CD8-positive, alpha-beta T cell (primary cell): ENCODE measurements at regions of chr5 and their contacts with region 1.

Region 1: DNA sequence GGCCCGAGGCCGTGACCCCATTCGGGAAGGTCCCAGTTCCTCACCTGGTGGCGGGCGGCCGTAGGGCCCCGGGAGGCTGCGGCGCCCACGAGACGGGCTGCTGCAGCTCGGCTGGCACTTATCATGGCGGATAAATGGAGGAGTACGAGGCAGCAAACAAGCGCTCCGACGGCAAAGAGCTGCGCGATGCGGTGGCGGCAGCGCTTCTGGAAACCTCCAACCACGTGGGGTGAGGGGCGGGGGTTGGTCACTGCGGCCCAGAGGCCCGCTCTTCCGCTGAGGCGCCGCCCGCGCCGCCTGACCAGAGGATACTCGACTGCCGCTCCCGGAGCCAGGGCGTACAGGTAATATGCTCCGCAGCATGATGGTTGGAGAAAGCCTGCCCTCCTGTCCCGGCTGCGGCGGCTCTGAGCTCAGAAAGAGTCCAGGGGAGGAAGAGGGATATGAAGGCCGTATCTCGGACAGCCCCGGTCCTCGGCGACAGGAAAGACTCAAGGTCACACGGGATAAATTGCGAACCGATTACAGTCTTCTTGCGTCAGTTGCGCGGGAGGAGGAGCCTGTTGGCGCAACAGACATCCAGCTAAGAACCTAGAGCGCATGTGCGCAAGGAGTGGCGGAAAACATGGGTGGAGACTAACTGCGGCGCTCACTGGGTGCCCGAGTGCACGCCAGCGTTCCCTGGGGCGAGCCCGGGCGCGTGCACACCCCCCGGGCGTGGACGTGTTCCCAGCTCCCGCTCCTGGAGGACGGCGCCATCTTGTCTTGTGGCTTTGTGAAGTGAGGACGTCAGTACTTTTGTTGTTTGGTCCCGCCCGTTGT is at the start of gene HSPA9:
- DNase-seq: peak; percentile 91 to 100 (median 97)
- ATAC-seq: peak; percentile 82
- H3K4me3 ChIP-seq: peak within 1 kb of the TSS; percentile 77 to 80
- H3K4me3 Mint-ChIP-seq: peak within 1 kb of the TSS; percentile 99
- H3K27ac ChIP-seq: peak within 1 kb of the TSS; percentile 98 to 99
- H3K27ac Mint-ChIP-seq: peak within 1 kb of the TSS; percentile 100
- H3K4me1 ChIP-seq: peaks cover 21% of the 10 kb centered on the region
- H3K4me1 Mint-ChIP-seq: peaks cover 43% of the 10 kb centered on the region
- H3K27me3 ChIP-seq: no peaks in the 10 kb centered on the region
- H3K27me3 Mint-ChIP-seq: no peaks in the 10 kb centered on the region
- CTCF ChIP-seq: no peak
- total RNA-seq, gene HSPA9: 464 to 500 TPM

Region 2: DNA sequence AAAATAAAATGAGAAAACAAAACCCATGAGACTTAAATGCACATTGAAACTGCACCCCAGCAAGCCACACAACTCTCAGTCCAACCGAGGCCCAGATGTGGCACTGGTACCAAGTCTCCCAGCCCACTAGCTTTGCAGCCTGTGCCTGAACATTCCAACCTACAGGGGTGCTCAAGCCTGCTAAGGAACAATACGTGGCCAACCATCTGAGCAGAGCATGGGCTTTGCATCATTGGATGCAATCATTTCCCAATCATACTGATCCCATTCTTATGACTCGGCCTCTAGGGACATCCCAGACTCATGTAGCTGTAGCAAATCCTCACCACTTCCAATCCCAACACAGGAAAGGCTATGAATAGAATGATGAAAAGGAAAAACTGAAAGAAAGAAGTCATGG is 1373.5 kb before region 1 on chr5:
- CTCF ChIA-PET with region 1: no interaction called
- POLR2A ChIA-PET with region 1: no interaction called
- intact Hi-C with region 1: no loop called
- DNase-seq: no peak
- ATAC-seq: no peak
- H3K4me3 ChIP-seq: no peak overlapping the region
- H3K4me3 Mint-ChIP-seq: no peak overlapping the region
- H3K27ac ChIP-seq: no peak overlapping the region
- H3K27ac Mint-ChIP-seq: no peak overlapping the region
- H3K4me1 ChIP-seq: no peaks in the 10 kb centered on the region
- H3K4me1 Mint-ChIP-seq: no peaks in the 10 kb centered on the region
- H3K27me3 ChIP-seq: no peaks in the 10 kb centered on the region
- H3K27me3 Mint-ChIP-seq: no peaks in the 10 kb centered on the region
- CTCF ChIP-seq: no peak

Region 3: DNA sequence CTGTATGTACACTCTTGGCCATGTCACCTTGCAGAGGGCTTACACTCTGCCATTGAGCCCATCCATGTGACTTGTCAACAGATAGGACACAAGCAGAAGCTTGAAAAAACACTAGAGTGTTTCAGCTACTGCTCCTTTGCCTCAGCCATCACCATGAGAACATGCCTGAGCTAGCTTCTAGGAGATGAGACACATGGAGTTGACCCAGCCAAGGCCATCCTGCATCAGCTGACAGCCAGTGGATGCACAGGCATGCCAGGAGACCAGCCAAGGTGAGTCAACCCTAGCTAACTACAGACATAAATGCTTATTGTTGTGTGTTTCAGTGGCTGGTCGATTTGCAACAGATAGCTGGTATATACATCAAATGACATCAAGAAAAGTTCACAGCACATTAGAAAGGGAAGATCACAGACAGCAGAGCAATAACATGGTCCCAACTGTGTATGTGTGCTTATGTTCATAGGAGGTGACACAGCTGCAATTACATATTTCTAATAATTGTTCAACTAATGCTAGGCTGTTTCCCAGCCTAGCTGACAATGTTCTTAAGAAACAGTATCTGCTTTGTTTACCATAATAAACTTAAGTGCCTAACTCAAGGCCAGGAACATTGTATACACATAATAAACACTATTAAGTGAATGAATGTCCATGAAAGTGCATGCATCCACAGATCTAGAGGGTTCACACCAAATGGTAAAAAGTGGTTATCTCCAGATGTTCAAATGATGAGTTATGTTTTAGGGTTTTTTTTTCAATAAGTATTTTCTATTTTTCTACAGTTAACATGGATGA is 1182.0 kb before region 1 on chr5:
- CTCF ChIA-PET with region 1: no interaction called
- POLR2A ChIA-PET with region 1: no interaction called
- intact Hi-C with region 1: no loop called
- DNase-seq: no peak
- ATAC-seq: no peak
- H3K4me3 ChIP-seq: no peak overlapping the region
- H3K4me3 Mint-ChIP-seq: no peak overlapping the region
- H3K27ac ChIP-seq: no peak overlapping the region
- H3K27ac Mint-ChIP-seq: no peak overlapping the region
- H3K4me1 ChIP-seq: no peaks in the 10 kb centered on the region
- H3K4me1 Mint-ChIP-seq: no peaks in the 10 kb centered on the region
- H3K27me3 ChIP-seq: no peaks in the 10 kb centered on the region
- H3K27me3 Mint-ChIP-seq: peaks cover 13% of the 10 kb centered on the region
- CTCF ChIP-seq: no peak

Region 4: DNA sequence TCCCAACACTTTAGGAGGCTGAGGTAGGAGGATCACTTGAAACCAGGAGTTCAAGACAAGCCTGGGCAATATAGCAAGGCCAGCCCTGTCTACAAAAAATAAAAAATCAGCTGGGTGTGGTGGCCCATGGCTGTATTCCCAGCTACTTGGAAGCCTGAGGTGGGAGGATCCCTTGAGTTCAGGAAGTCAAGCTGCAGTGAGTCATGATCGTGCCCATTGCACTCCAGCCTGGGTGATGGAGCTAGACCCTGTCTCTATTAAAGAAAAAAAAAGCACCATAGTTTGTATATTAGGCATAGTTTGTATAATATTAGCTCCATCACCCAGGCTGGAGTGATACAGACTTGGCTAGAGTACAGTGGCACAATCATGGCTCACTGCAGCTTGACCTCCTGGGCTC is 426.6 kb before region 1 on chr5:
- CTCF ChIA-PET with region 1: no interaction called
- POLR2A ChIA-PET with region 1: no interaction called
- intact Hi-C with region 1: no loop called
- DNase-seq: no peak
- ATAC-seq: no peak
- H3K4me3 ChIP-seq: no peak overlapping the region
- H3K4me3 Mint-ChIP-seq: no peak overlapping the region
- H3K27ac ChIP-seq: no peak overlapping the region
- H3K27ac Mint-ChIP-seq: no peak overlapping the region
- H3K4me1 ChIP-seq: no peaks in the 10 kb centered on the region
- H3K4me1 Mint-ChIP-seq: no peaks in the 10 kb centered on the region
- H3K27me3 ChIP-seq: no peaks in the 10 kb centered on the region
- H3K27me3 Mint-ChIP-seq: no peaks in the 10 kb centered on the region
- CTCF ChIP-seq: no peak

Region 5: DNA sequence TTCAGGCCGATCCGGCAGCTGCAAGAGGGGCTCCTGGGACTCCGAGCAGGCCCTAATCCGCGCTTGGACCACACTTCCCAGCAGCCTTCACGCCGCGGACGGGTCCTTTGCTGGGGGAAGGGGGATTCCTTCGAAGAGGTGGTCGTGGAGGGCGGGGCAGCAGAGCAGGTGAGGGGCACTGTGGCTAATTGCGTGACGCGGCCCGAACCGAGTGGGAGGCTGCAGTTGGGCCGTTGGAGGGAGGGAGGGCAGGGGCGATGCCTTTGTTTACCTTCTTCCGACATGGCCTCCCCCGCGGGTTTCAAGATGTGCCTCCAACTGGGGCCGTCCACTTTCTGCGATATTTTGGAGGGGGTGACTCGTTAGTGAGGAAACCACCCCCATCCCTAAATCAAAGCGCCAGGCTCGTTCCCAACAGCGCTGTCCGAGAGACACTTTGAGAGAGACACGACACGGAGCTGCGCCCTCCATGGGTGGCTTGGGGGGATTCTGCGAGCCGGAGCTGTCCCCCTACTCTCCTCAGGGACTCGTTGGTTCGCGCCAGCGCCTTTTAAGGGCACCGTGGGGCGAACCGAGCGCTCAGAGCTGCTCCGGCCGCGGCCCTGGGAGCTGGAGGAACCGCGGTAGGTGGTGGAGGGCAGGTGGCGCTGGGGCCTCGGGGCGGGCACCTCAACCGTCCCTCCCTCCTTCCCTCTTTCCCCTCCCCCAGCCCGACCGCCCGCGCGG is 237.6 kb before region 1 on chr5 and contains the start of gene FAM53C:
- CTCF ChIA-PET with region 1: interaction called, 3 read pairs
- POLR2A ChIA-PET with region 1: no interaction called
- intact Hi-C with region 1: loop called in 1 of 2 experiments (anchors 5 kb)
- DNase-seq: peak; percentile 88 to 98 (median 91)
- ATAC-seq: peak; percentile 84
- H3K4me3 ChIP-seq: peak within 1 kb of the TSS; percentile 69 to 85
- H3K4me3 Mint-ChIP-seq: peak within 1 kb of the TSS; percentile 93
- H3K27ac ChIP-seq: peak within 1 kb of the TSS; percentile 95 to 99
- H3K27ac Mint-ChIP-seq: peak within 1 kb of the TSS; percentile 100
- H3K4me1 ChIP-seq: peaks cover 23% of the 10 kb centered on the region
- H3K4me1 Mint-ChIP-seq: peaks cover 41% of the 10 kb centered on the region
- H3K27me3 ChIP-seq: no peaks in the 10 kb centered on the region
- H3K27me3 Mint-ChIP-seq: no peaks in the 10 kb centered on the region
- CTCF ChIP-seq: no peak
- total RNA-seq, gene FAM53C: 99.8 to 99.9 TPM

Region 6: DNA sequence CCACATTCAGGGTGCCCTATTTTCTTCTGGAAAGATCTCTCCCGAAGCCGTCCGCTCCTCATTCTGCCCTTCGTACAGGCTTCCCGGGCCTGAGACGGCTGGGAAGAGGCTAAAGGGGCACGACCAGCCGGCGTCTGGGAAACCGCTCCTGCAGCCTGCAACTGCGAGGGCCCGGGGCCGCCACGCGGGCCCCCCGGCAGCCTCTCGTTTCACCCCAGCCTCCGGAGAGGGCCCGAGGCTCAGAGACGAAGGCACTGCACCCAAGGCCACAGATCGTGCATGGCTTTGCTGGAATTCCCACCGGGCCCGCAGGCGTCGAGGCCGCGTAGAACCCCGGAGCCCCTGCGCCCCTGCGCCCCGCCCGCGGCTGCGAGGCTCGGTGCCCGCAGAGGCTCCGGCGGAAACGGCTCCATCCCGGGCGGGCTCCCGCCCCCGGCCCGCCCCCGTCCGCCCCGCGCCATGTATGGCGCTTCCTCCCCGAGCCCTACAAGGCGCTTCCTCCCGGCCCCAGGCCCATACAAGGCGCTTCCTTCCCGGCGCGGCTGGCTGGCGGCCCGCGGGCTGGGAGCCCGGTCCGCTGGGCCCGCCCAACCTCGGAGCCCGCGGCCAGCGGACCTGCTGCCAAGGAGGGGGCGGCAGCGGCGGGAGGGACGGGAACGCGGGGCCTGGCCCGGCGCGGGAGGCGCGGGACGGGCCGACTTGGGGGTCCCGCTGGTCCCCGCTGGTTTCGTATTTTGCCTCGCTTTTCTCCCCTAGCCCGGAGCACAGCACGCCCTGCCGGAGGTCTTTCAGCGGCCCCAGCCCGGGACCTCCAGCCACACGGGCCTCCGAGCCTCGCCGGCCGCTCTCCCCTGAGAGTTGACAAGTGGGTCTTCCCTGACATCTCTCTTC is 83.5 kb before region 1 on chr5:
- CTCF ChIA-PET with region 1: no interaction called
- POLR2A ChIA-PET with region 1: no interaction called
- intact Hi-C with region 1: loop called in 1 of 2 experiments (anchors 1 kb)
- DNase-seq: peak; percentile 72 to 94 (median 84)
- ATAC-seq: peak; percentile 98
- H3K4me3 ChIP-seq: peak overlapping the region; percentile 42 to 63
- H3K4me3 Mint-ChIP-seq: peak overlapping the region; percentile 93
- H3K27ac ChIP-seq: no peak overlapping the region
- H3K27ac Mint-ChIP-seq: no peak overlapping the region
- H3K4me1 ChIP-seq: peaks cover 19% of the 10 kb centered on the region
- H3K4me1 Mint-ChIP-seq: peaks cover 16% of the 10 kb centered on the region
- H3K27me3 ChIP-seq: peaks cover 0 to 15% of the 10 kb centered on the region in 2 experiments
- H3K27me3 Mint-ChIP-seq: peaks cover 18% of the 10 kb centered on the region
- CTCF ChIP-seq: no peak

Region 7: DNA sequence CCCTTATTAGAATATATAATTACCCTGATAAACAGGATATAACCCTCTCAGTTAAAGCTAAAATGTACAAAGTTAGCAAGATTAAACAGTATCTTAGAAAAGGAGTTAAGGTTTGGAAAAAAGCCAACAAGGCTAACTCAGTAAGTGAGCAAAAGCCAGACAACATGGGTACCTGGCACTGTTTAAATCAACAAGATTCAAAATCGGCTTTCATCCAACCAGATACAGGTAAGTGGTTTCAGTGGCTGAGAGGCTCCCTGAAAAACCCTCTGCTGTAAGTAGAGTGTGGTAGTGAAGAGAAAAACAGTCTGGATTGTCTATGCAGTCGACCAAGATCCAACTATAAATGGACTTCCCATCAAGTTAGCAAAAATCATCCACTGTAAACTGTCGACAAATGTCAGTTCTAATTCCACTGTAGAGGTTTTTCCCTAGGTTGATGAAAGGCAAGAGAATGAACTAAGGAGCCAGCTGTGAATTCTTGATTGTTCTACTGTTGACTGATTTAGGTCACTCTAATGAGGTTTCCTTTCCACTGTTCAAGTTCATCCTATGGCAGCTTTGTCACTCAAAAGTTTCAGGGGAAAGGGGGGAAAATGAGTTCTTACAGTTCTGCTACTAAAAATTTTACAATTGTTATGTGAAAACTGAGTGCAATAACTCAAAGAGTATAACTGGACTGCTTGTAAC is 59.7 kb before region 1 on chr5:
- CTCF ChIA-PET with region 1: no interaction called
- POLR2A ChIA-PET with region 1: no interaction called
- intact Hi-C with region 1: no loop called
- DNase-seq: no peak
- ATAC-seq: no peak
- H3K4me3 ChIP-seq: no peak overlapping the region
- H3K4me3 Mint-ChIP-seq: no peak overlapping the region
- H3K27ac ChIP-seq: no peak overlapping the region
- H3K27ac Mint-ChIP-seq: no peak overlapping the region
- H3K4me1 ChIP-seq: no peaks in the 10 kb centered on the region
- H3K4me1 Mint-ChIP-seq: peaks cover 10% of the 10 kb centered on the region
- H3K27me3 ChIP-seq: no peaks in the 10 kb centered on the region
- H3K27me3 Mint-ChIP-seq: no peaks in the 10 kb centered on the region
- CTCF ChIP-seq: no peak

Region 8: GRCh38 chr5:138752951-138753793 is 177.8 kb after region 1 on chr5 and contains the start of gene CTNNA1:
- CTCF ChIA-PET with region 1: no interaction called
- POLR2A ChIA-PET with region 1: no interaction called
- intact Hi-C with region 1: loop called in 1 of 2 experiments (anchors 10 kb)
- DNase-seq: peak in 8 of 9 experiments; percentile 33 to 68 (median 50)
- ATAC-seq: peak; percentile 79
- H3K4me3 ChIP-seq: peak within 1 kb of the TSS; percentile 45 to 60
- H3K4me3 Mint-ChIP-seq: peak within 1 kb of the TSS; percentile 81
- H3K27ac ChIP-seq: no peak within 1 kb of the TSS
- H3K27ac Mint-ChIP-seq: no peak within 1 kb of the TSS
- H3K4me1 ChIP-seq: peaks cover 14% of the 10 kb centered on the region
- H3K4me1 Mint-ChIP-seq: peaks cover 15% of the 10 kb centered on the region
- H3K27me3 ChIP-seq: peaks cover 2 to 7% of the 10 kb centered on the region in 2 experiments
- H3K27me3 Mint-ChIP-seq: peaks cover 39% of the 10 kb centered on the region
- CTCF ChIP-seq: no peak
- total RNA-seq, gene CTNNA1: 2.9 to 5.0 TPM

Region 9: GRCh38 chr5:139262742-139263445 is 687.5 kb after region 1 on chr5:
- CTCF ChIA-PET with region 1: interaction called, 12 read pairs
- POLR2A ChIA-PET with region 1: no interaction called
- intact Hi-C with region 1: loop called (anchors 1 to 2 kb)
- DNase-seq: peak; percentile 37 to 80 (median 65)
- ATAC-seq: peak; percentile 99
- H3K4me3 ChIP-seq: no peak overlapping the region
- H3K4me3 Mint-ChIP-seq: no peak overlapping the region
- H3K27ac ChIP-seq: no peak overlapping the region
- H3K27ac Mint-ChIP-seq: no peak overlapping the region
- H3K4me1 ChIP-seq: peaks cover 13% of the 10 kb centered on the region
- H3K4me1 Mint-ChIP-seq: peaks cover 15% of the 10 kb centered on the region
- H3K27me3 ChIP-seq: no peaks in the 10 kb centered on the region
- H3K27me3 Mint-ChIP-seq: peaks cover 3% of the 10 kb centered on the region
- CTCF ChIP-seq: peak; percentile 56

Region 10: GRCh38 chr5:139403787-139404483 is 828.5 kb after region 1 on chr5 and contains the start of gene SPATA24:
- CTCF ChIA-PET with region 1: interaction called, 3 read pairs
- POLR2A ChIA-PET with region 1: no interaction called
- intact Hi-C with region 1: loop called in 1 of 2 experiments (anchors 10 kb)
- DNase-seq: peak; percentile 93 to 99 (median 98)
- ATAC-seq: peak; percentile 88
- H3K4me3 ChIP-seq: peak within 1 kb of the TSS; percentile 61
- H3K4me3 Mint-ChIP-seq: peak within 1 kb of the TSS; percentile 95
- H3K27ac ChIP-seq: peak within 1 kb of the TSS; percentile 68 to 94
- H3K27ac Mint-ChIP-seq: peak within 1 kb of the TSS; percentile 99
- H3K4me1 ChIP-seq: peaks cover 16% of the 10 kb centered on the region
- H3K4me1 Mint-ChIP-seq: peaks cover 32% of the 10 kb centered on the region
- H3K27me3 ChIP-seq: no peaks in the 10 kb centered on the region
- H3K27me3 Mint-ChIP-seq: no peaks in the 10 kb centered on the region
- CTCF ChIP-seq: no peak
- total RNA-seq, gene SPATA24: 2.2 to 3.0 TPM